H1 (cell line): ENCODE measurements at regions of chr11 and their contacts with region 1.

Region 1: DNA sequence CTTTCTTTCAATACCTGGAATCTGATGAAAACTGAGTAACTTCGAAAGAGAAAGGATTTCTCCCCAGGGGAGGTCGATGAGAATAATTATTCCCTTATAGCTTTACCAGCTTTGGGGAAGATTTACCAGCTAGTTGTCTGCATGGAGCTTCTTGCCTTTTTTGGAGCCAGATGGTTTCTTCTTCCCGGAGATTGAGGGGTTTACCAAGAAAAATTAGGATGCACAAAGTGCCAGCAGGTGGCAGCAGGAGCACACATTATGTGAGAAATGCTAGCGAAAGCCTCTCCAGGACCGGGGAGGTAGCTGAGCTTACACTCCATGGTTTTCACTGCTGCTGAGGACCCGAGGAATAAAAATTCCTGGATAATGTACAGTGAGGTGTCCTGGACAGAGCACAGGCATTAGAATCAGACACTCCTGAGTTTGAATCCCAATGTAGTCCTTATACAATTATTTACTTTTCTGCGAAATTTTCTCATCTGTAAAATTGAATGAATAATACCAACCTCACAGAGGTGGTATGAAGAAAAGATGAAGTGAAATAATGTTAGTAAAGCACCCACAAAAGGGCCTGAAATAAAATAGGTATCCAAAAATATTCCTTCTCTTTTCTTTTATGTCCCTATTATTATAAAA is 46.0 kb upstream of the PARVA start:
- DNase-seq: peak; percentile 53 to 84
- H3K4me3 ChIP-seq: no peak overlapping the region
- H3K27ac ChIP-seq: no peak overlapping the region
- H3K4me1 ChIP-seq: peaks cover 0 to 11% (median 1%) of the 10 kb centered on the region in 4 experiments; a peak in 4 of 7 replicates
- H3K27me3 ChIP-seq: no peaks in the 10 kb centered on the region; a peak in 1 of 7 replicates
- CTCF ChIP-seq: peak; percentile 42 to 83 (median 80)
- EP300 ChIP-seq: no peak
- POLR2A ChIP-seq: no peak
- RAD21 ChIP-seq: peak; percentile 98

Region 2: DNA sequence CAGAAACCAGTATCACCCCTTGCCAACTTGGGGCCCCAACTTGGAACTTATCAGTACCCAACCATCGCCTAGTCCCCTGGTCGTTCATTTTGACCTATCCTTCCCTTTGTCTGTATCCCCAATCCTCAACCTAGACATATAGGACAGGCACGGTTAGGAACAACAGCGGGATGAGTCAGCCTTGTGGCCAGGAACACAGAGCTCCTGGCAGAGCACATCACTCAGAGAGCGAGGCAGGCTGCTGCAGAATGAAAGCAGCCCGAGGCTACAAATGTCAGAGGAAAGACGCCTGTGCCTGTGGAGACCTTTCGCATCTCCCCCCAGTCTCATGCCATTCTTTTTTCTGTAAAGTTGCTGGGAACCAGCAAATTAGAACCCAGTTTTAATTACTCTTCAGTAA is 337.5 kb before region 1 on chr11:
- CTCF ChIA-PET with region 1: no interaction called
- POLR2A ChIA-PET with region 1: no interaction called
- DNase-seq: no peak
- H3K4me3 ChIP-seq: no peak overlapping the region
- H3K27ac ChIP-seq: no peak overlapping the region
- H3K4me1 ChIP-seq: no peaks in the 10 kb centered on the region
- H3K27me3 ChIP-seq: no peaks in the 10 kb centered on the region
- CTCF ChIP-seq: no peak
- EP300 ChIP-seq: no peak
- POLR2A ChIP-seq: no peak
- RAD21 ChIP-seq: no peak

Region 3: DNA sequence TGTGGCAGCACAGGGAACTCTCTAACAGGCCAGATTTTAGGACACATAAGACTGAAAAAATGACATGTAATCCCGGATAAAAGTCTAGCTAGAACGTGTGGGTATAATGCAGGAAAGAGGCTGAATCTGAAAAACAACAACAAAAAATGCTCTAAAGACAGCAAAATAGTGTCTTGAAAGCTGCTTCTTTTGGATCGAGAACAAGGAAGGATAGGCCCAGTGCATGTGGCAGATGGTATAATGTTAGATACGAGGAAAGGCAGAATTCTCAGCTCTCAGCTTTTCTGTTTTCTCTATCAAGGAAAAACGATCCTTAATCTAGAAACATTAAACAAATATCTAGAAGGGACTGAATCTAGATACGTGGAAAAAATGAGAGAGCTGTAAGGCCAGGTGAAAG is 12.2 kb after region 1 on chr11:
- CTCF ChIA-PET with region 1: interaction called, 13 read pairs
- POLR2A ChIA-PET with region 1: no interaction called
- DNase-seq: no peak
- H3K4me3 ChIP-seq: no peak overlapping the region
- H3K27ac ChIP-seq: no peak overlapping the region
- H3K4me1 ChIP-seq: no peaks in the 10 kb centered on the region
- H3K27me3 ChIP-seq: no peaks in the 10 kb centered on the region
- CTCF ChIP-seq: no peak
- EP300 ChIP-seq: no peak
- POLR2A ChIP-seq: no peak
- RAD21 ChIP-seq: no peak

Region 4: DNA sequence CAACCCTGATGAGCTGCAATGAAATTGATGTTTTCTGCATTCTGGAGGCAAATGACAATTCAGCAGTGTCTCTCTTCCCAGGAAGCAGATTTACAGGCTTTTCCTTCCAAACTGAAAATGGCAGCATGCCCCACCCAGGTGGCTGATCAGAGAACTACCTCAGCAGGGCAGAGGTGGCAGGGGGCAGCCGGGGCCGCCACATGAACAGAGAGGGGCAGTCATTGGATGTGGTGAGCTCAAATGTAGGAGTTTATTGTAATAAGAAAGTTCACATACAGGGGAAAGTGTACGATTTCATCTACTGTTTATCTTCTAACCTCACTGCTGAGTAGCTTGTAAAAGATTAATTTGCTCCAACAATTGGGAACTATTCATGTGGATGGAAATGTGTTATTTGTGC is 30.3 kb after region 1 on chr11:
- CTCF ChIA-PET with region 1: interaction called, 12 read pairs
- POLR2A ChIA-PET with region 1: no interaction called
- DNase-seq: no peak
- H3K4me3 ChIP-seq: no peak overlapping the region
- H3K27ac ChIP-seq: no peak overlapping the region
- H3K4me1 ChIP-seq: peaks cover 0 to 4% (median 3%) of the 10 kb centered on the region in 4 experiments; a peak in 3 of 7 replicates
- H3K27me3 ChIP-seq: no peaks in the 10 kb centered on the region
- CTCF ChIP-seq: no peak
- EP300 ChIP-seq: no peak
- POLR2A ChIP-seq: no peak
- RAD21 ChIP-seq: peak in 1 of 2 experiments; percentile 26; a peak in 2 of 4 replicates

Region 5: DNA sequence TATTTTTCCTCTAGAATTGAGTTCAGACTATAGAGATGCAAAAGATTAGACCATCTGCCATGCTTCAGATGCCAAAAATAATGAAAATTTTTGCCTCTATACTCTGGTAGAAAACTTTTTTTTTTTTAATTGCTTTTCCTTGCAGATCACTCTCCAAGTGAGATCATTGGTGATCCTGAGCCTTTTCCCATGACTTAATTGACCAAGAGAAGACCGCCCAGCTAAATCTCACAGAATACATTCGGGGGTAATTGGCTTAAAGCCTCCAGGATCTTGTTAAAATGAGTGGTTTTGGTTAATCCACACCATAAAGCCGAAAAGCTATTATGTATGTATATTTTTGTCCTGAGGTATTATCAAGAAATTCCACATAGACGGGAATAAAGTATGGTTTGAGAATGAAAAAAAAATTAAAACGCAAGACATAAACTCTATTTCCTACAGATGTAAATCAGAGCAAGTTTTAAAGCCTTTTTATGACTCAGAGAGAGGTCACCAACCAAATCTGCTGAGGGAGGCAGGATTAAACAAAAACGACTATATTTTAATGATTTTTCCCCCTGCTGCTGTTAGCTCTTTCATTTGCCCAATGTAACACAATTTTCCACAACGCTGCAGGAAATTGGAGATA is 110.0 kb after region 1 on chr11:
- CTCF ChIA-PET with region 1: no interaction called
- POLR2A ChIA-PET with region 1: no interaction called
- DNase-seq: no peak
- H3K4me3 ChIP-seq: no peak overlapping the region
- H3K27ac ChIP-seq: no peak overlapping the region
- H3K4me1 ChIP-seq: peaks cover 0 to 3% (median 0%) of the 10 kb centered on the region in 4 experiments; a peak in 2 of 7 replicates
- H3K27me3 ChIP-seq: no peaks in the 10 kb centered on the region
- CTCF ChIP-seq: no peak
- EP300 ChIP-seq: no peak
- POLR2A ChIP-seq: no peak
- RAD21 ChIP-seq: no peak

Region 6: DNA sequence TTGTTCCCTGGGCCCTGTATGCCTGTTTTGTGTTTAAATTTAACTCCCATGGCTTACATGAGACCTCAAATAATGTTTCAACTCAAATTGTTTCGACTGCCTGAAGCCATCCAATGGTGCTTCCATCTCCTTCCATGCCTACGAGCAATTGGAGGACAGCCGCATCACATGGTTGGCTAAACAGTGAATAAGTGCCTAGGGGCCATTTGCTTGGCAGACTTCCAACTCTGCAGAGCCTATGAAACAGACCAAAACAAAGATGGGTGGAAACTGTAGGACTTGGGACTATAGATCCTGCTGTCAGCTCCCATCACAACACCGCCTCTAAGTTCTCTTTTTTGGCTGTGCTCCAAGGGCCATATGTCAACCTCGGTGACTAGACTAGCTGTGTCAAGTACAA is 130.2 kb after region 1 on chr11:
- CTCF ChIA-PET with region 1: no interaction called
- POLR2A ChIA-PET with region 1: no interaction called
- DNase-seq: no peak
- H3K4me3 ChIP-seq: no peak overlapping the region
- H3K27ac ChIP-seq: no peak overlapping the region
- H3K4me1 ChIP-seq: no peaks in the 10 kb centered on the region
- H3K27me3 ChIP-seq: peaks cover 0 to 1% (median 0%) of the 10 kb centered on the region in 4 experiments; a peak in 1 of 7 replicates
- CTCF ChIP-seq: no peak
- EP300 ChIP-seq: no peak
- POLR2A ChIP-seq: no peak
- RAD21 ChIP-seq: no peak

Region 7: DNA sequence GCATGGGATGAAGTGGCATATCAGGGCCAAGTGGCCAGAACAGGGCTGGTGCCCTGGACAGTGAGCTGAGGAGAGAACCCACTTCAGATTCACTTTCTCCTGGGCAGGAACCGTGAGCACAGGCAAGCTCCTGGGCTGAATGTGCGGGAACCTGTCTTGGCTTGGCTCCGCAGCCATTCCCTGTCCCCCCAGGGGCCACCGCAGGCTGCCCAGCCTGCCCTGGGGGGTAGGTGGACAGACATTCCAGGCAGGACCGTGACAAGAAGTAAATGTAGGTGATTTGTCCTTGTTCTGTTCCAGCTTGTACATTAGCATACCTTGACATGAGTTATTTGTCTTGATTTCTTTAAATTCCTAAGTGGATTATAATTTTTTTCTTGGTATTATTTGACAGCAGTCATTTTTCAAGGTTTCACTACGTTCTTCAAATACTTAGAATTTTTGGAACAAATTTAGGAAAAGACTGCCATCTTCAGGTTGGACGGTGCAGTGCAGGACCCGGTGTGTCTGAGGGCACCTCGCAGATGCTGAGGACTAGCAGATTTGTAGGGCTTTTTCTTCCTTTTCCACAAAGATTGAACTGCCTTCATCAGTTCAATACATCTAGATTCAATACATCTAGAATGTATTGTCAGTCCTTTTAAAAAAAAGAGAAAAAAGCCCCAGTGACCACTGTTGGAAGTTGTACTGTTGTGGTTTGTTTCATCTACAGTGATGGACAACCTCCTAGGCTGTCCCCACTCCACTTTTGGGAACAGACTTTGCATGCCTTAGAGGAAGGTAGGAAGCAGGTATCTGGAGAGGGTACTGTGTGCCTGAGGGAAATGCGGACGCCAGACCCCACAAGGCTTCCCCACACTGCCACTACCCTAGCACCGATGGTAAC is 562.7 kb after region 1 on chr11:
- CTCF ChIA-PET with region 1: interaction called, 15 read pairs
- POLR2A ChIA-PET with region 1: no interaction called
- DNase-seq: peak in 1 of 2 experiments; percentile 89
- H3K4me3 ChIP-seq: no peak overlapping the region
- H3K27ac ChIP-seq: no peak overlapping the region
- H3K4me1 ChIP-seq: peaks cover 3 to 12% (median 5%) of the 10 kb centered on the region in 4 experiments; a peak in 5 of 7 replicates
- H3K27me3 ChIP-seq: no peaks in the 10 kb centered on the region
- CTCF ChIP-seq: peak; percentile 72 to 77 (median 75)
- EP300 ChIP-seq: no peak
- POLR2A ChIP-seq: no peak
- RAD21 ChIP-seq: peak; percentile 86

Region 8: DNA sequence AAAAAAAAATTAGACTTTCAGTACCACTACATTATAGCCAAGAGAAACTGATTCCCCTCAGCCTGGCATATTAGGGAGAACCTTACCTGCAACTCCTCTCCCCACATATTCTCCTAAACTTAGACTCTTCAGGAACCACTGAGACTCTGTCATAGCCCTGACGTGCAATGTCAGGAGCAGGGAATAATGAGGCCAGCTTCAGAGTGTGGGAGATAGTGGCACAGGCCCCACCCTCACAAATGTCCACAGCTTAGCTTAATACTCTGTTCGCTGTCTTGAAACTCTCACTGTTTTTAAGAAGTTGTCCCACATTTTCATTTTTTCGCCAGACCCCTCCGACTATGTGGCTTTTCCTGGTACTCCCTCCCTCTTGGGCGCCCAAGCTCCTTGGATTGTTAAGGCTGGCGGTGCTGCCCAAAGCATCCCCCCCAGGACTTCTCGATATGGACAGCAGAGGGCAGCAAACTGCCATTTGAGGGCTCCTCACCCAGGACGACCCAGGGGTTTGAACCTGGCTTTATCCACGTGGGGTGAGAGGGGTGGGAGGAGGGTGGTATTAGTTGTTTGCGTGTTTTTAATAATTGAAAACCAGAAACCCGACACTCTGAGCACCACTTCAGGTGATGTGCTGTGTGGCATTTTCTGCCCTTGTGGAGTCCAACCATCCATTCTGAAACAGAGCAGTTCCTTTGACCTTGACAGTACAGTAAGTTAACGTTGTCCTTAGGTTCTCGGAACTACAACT is 632.6 kb after region 1 on chr11:
- CTCF ChIA-PET with region 1: interaction called, 19 read pairs
- POLR2A ChIA-PET with region 1: no interaction called
- DNase-seq: peak; percentile 49 to 92
- H3K4me3 ChIP-seq: no peak overlapping the region
- H3K27ac ChIP-seq: no peak overlapping the region
- H3K4me1 ChIP-seq: peaks cover 0 to 2% (median 0%) of the 10 kb centered on the region in 4 experiments; a peak in 1 of 7 replicates
- H3K27me3 ChIP-seq: no peaks in the 10 kb centered on the region
- CTCF ChIP-seq: peak; percentile 66 to 90 (median 79)
- EP300 ChIP-seq: no peak
- POLR2A ChIP-seq: no peak
- RAD21 ChIP-seq: peak; percentile 96 to 98